ENCODE measurements at regions of chr7 and their contacts with region 1.

Region 1: DNA sequence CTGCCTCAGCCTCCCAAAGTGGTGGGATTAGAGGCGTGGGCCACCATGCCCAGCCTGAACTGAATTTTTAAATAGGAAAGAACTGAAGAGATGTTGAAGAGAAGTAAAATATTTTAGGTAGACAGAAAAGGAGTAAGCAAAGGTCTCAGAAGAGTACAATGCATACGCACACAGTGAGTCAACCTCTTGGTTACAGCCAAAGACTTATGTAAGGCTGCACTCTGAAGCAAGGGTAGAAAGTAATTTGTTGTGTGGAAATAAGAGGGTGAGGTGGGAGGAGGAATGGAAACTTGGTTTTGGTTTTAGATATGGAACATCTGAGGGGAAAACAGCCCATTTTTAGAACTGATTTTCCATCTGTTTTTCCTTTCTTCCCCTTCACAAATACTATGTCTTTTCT is 17.6 kb downstream of the KRIT1 start:
- DNase-seq: no peak
- ATAC-seq: no peak
- H3K4me3 ChIP-seq: no peak overlapping the region
- H3K27ac ChIP-seq: no peak overlapping the region
- H3K4me1 ChIP-seq: no peaks in the 10 kb centered on the region
- H3K27me3 ChIP-seq: no peaks in the 10 kb centered on the region
- CTCF ChIP-seq: no peak

Region 2: DNA sequence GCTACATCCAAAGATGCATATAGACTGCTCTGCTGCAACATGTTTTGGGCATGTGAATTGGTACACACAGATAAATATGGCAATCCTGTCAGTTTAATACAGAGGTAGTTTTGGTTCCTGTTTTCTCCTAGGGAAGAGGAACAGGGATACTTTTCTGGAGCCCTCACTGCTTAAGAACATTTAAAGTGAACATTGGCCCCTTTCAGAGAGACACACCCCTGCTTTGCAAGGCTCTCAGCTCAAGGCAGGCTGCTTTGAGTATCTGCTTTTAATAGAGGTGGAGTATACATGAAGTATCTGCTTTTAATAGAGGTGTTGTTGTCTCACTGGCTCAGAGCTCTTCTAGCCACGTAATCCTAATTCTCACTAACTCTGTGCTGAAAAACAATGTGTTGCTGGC is 132.7 kb before region 1 on chr7:
- intact Hi-C with region 1: loop called in 2 of 10 experiments (anchors 10 kb)
- DNase-seq: no peak
- ATAC-seq: no peak
- H3K4me3 ChIP-seq: no peak overlapping the region
- H3K27ac ChIP-seq: no peak overlapping the region
- H3K4me1 ChIP-seq: no peaks in the 10 kb centered on the region
- H3K27me3 ChIP-seq: no peaks in the 10 kb centered on the region
- CTCF ChIP-seq: no peak

Region 3: DNA sequence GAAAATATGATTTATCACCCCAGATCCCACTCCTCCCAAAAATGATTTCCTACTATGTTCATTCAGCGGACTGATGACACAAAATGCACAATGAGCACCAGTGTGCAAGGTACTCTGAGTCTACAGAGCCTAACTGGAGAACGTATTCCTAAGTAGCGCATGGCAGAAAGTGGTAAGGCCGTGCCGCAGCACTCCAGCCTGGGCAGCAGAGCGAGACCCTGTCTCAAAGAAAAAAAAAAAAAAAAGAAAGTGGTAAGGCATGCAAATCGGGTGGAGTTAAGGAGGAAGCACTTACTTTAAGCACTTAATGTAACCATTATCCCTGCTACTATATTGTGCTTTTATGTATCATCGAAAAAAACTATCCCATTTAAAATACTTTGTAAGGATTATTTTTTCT is 119.3 kb before region 1 on chr7:
- intact Hi-C with region 1: loop called in 1 of 10 experiments (anchors 10 kb)
- DNase-seq: no peak
- ATAC-seq: no peak
- H3K4me3 ChIP-seq: no peak overlapping the region
- H3K27ac ChIP-seq: no peak overlapping the region
- H3K4me1 ChIP-seq: peaks cover 0 to 11% (median 0%) of the 10 kb centered on the region in 9 donors
- H3K27me3 ChIP-seq: no peaks in the 10 kb centered on the region
- CTCF ChIP-seq: no peak

Region 4: DNA sequence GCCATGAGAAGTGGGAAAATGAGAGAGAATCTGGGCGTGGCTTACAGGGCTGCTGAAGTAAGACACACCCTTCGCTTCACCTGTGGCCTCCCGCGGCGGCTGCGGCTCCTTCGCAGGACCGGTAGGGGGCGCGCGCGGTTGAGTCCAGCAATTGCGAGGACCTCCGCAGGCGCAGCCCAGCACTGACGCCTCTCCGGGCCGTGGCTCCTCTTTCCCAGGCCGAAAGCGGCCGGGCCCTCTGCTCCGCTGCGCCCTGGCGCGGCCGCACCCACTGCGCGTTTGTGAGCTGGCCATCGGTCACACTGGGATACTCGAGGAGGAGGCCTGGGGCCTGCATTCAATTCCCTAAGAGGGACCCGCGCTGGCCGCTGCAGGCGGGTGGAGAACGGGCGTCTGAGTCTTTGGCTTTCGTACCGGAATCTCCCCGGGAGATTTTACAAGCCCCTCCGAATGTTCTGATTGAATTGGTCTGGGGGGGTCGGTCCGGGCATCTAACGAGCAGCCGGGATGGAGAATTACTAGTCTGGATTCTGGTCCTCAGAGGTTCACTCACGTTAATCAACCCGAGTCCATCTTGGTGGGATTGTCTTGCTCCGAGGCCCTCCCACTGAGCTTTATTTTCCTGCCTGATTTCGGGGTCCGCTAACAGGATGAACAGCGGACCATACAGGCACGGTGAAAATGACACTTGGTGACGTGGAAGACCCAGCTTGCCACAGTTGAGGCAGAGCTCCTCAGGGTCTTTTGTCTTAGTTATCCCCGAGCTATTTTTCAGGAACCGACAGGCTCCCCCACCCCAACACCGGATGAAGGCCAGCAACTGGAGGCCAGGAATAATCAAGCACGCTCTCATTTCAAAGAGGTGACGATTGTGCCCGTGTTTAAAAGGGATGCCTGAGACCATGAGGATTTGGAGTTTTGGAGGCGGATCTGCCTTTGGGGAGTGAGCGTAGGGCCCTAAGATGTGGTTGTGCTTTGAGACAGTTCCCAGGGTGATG is 48.9 kb before region 1 on chr7 and contains the start of gene LRRD1:
- intact Hi-C with region 1: no loop called
- DNase-seq: peak; percentile 80 to 89
- ATAC-seq: peak; percentile 97 to 100 (median 98)
- H3K4me3 ChIP-seq: peak within 1 kb of the TSS; percentile 39 to 69 (median 63)
- H3K27ac ChIP-seq: peak within 1 kb of the TSS in 9 of 10 donors; percentile 70 to 83 (median 78)
- H3K4me1 ChIP-seq: peaks cover 0 to 14% (median 0%) of the 10 kb centered on the region in 9 donors
- H3K27me3 ChIP-seq: no peaks in the 10 kb centered on the region
- CTCF ChIP-seq: peak; percentile 93 to 100 (median 99)
- total RNA-seq, gene LRRD1: 0.08 to 0.18 (median 0.12) TPM in 4 of 10 donors, not detected in the others

Region 5: DNA sequence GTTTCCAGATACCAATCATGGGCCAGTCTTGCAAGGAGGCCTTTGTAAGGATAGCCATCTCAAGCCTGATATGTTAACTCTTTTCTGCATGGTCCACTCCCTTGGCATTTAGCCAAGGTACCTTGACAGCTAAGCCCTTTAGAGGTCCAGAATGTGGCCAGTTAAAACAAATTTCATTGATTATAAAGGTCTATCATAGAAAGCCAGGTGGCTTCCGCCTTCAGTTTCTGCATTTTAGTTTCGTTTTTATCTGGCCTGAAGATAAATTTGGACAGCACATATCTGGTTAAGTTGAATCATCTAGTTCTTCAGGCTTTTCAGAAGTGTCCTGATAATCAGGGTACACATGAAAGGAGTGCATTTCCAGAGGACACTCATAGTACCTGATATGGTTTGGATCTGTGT is 48.4 kb after region 1 on chr7:
- intact Hi-C with region 1: no loop called
- DNase-seq: no peak
- ATAC-seq: no peak
- H3K4me3 ChIP-seq: no peak overlapping the region
- H3K27ac ChIP-seq: no peak overlapping the region
- H3K4me1 ChIP-seq: peaks cover 0 to 26% (median 9%) of the 10 kb centered on the region in 9 donors
- H3K27me3 ChIP-seq: no peaks in the 10 kb centered on the region
- CTCF ChIP-seq: no peak

Region 6: GRCh38 chr7:92359801-92360200 is 131.7 kb after region 1 on chr7:
- intact Hi-C with region 1: loop called in 1 of 10 experiments (anchors 10 kb)
- DNase-seq: no peak
- ATAC-seq: no peak
- H3K4me3 ChIP-seq: no peak overlapping the region
- H3K27ac ChIP-seq: no peak overlapping the region
- H3K4me1 ChIP-seq: peaks cover 0 to 8% (median 0%) of the 10 kb centered on the region in 9 donors
- H3K27me3 ChIP-seq: no peaks in the 10 kb centered on the region
- CTCF ChIP-seq: no peak

Measured in heart right ventricle (tissue), 16 donors.